B cell (primary cell): ENCODE measurements at regions of chr19 and their contacts with region 1.

Region 1: DNA sequence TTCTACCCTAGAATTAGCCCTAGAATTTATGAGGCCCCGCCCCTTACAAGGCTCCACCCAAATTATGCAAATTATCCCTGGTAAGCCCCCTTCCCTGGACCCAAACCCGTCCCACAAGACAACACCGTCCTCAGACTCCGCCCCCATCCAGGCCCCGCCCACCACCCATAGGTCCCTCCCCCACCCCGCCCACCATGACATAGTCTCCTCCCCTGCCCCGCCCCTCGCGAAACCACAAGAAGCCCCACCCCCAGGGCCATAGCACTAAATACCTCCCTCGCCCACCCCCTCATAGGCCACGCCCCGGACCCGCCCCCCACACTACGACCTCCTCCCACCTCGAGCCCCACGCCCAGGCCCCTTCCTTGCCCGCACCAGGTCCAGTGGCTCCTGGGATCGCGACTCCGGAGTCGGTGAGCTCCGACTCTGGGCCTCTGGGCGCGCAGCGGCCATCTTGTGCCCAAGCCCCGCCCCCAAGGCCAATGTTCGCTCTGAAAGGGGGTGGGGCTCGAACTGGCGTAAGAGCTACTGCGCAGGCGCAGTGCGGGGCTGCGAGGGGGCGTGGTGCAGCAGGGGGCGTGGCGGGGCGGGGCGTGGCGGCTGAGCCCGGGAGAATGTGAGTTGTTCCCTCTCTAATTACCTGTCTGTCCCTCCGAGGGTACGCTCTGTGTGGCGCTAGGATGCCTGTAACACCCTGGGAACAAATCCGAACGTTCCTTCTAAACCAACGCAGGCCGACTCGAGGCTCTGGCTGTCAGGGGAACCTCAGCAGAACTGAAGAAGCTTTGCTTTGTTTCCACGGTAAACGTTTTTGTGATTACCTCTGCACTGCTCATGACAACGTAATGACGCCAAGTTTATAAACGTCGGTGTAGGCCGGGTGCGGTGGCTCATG is at the start of gene ZNF784:
- DNase-seq: peak; percentile 97
- ATAC-seq: peak; percentile 86
- H3K4me3 ChIP-seq: peak within 1 kb of the TSS in 4 of 5 experiments; percentile 47 to 84 (median 69)
- H3K4me3 Mint-ChIP-seq: peak within 1 kb of the TSS; percentile 95
- H3K27ac ChIP-seq: peak within 1 kb of the TSS; percentile 87
- H3K27ac Mint-ChIP-seq: peak within 1 kb of the TSS; percentile 99
- H3K4me1 ChIP-seq: peaks cover 10 to 14% of the 10 kb centered on the region in 2 donors
- H3K4me1 Mint-ChIP-seq: peaks cover 18% of the 10 kb centered on the region
- H3K27me3 ChIP-seq: no peaks in the 10 kb centered on the region
- H3K27me3 Mint-ChIP-seq: no peaks in the 10 kb centered on the region
- CTCF ChIP-seq: no peak
- total RNA-seq, gene ZNF784: 9.7 and 11.5 TPM in 2 replicates

Region 2: DNA sequence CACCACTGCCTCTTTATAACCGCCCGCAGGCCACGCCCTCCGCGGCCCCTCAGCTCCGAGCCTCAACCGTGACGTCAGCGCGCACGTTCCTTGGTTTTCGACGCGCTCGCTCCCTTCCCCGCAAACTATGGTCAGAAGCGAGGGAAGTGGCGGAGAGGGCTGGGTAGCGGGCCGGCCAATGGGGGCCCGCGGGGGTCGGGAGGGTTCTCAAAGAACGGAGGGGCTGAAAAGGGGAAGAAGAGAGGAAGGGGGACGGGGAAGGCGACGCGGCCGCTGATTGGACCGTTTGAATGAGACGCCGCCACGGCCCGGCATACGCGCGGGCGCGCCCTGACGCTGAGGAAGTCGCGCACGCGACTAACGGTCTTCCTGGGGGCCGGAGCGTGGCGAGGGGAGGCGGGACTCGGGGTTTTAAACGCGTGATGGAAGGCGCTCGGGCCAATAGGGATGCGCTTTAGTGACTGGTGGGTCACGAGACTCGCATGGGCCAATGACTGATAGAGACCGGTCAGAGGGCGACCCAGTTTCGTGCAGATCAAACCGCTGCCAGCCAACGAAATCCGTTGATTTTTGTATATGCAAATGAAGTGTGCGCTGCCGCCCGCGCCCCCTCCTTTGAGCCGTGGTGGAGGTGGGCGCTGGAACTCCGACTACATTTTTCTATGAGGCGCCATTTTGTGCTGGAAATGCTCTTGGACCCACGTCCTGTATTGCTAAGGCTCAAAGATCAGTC is 216.4 kb before region 1 on chr19:
- CTCF ChIA-PET with region 1: no interaction called
- POLR2A ChIA-PET with region 1: interaction called, 8 read pairs
- intact Hi-C with region 1: loop called (anchors 5 kb)
- DNase-seq: peak; percentile 100
- ATAC-seq: peak; percentile 83
- H3K4me3 ChIP-seq: peak overlapping the region; percentile 55 to 89 (median 77)
- H3K4me3 Mint-ChIP-seq: peak overlapping the region; percentile 98
- H3K27ac ChIP-seq: peak overlapping the region; percentile 99 to 100
- H3K27ac Mint-ChIP-seq: peak overlapping the region; percentile 99
- H3K4me1 ChIP-seq: peaks cover 11 to 25% of the 10 kb centered on the region in 2 donors
- H3K4me1 Mint-ChIP-seq: peaks cover 32% of the 10 kb centered on the region
- H3K27me3 ChIP-seq: no peaks in the 10 kb centered on the region
- H3K27me3 Mint-ChIP-seq: no peaks in the 10 kb centered on the region
- CTCF ChIP-seq: no peak

Region 3: DNA sequence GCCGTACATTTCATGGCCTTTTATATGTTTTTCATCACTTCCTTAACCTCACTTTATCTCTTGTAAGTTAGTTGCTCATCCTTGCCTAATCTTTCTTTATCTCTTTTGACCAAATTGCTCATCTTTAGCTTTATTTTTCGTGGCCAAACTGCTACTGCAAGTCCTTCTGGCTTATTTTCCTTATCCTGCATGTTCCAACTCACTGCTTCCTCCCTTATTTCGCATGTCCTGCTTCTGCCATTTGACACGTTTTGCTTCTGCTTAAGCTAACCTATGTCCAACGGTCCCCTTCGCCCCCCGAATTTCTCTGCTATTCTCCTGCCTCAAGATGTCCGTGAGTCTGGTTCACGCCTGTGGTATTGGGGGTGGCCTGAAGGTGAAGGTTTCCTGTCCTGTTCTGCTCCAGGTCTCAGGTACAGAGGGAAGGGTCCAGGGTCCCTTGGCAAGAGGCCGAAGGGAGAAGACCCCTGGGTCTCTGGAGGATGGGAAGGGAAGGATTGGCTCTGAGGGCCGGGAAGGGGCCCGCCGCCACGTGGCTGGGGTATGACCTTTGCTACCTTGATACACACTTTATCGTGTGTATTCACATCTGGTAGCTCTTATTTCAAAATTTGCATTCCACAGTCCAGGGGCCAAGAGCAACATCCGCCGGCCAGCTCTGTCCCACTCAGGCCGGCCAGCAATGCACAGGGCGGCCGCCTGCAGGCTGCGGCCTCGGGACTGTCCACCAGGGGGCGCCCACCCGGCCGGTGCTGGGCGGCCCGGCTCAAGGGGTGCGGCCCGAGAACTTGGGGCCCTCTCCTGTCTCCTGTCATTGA is 156.9 kb before region 1 on chr19:
- CTCF ChIA-PET with region 1: interaction called, 12 read pairs
- POLR2A ChIA-PET with region 1: interaction called, 5 read pairs
- intact Hi-C with region 1: no loop called
- DNase-seq: peak; percentile 79
- ATAC-seq: peak; percentile 99
- H3K4me3 ChIP-seq: no peak overlapping the region
- H3K4me3 Mint-ChIP-seq: no peak overlapping the region
- H3K27ac ChIP-seq: no peak overlapping the region
- H3K27ac Mint-ChIP-seq: no peak overlapping the region
- H3K4me1 ChIP-seq: peaks cover 4 to 7% of the 10 kb centered on the region in 2 donors
- H3K4me1 Mint-ChIP-seq: peaks cover 6% of the 10 kb centered on the region
- H3K27me3 ChIP-seq: no peaks in the 10 kb centered on the region
- H3K27me3 Mint-ChIP-seq: no peaks in the 10 kb centered on the region
- CTCF ChIP-seq: peak; percentile 99

Region 4: DNA sequence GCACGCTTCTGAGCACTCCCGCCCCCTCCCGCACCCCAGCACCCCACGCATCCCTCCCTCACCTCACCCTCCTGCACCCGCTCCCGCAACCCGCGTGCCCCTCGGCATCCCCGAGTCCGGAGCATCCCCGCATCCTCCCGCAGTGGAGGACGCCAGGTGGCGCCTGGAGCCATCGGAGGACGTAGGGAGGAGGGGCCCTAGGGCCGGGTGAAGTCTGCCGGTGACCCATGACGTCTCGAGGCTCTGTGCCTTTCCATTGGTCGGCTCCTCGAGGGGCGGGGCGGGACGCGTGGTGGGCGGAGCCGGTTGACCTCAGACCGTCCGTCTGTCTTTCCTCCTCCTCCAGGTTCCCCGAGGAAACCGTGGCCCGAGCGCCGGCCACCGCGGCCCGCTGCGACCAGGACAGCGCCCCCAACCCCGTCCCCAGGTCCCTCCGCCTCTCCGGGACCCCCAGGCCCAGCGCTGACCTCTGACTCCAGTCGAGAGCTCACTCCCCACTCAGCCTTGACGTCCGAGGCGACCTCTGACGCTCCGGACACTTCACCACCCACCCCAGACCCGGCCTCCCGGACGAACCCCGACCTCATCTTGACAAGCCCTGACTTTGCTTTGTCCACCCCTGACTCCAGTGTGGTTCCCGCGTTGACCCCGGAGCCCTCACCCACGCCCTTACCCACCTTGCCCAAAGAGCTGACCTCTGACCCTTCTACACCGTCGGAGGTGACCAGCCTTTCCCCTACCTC is 107.3 kb before region 1 on chr19:
- CTCF ChIA-PET with region 1: interaction called, 7 read pairs
- POLR2A ChIA-PET with region 1: interaction called, 3 read pairs
- intact Hi-C with region 1: loop called (anchors 1 kb)
- DNase-seq: peak; percentile 94
- ATAC-seq: peak; percentile 100
- H3K4me3 ChIP-seq: peak overlapping the region in 4 of 5 experiments; percentile 53 to 60 (median 58)
- H3K4me3 Mint-ChIP-seq: peak overlapping the region; percentile 88
- H3K27ac ChIP-seq: peak overlapping the region; percentile 91 to 93
- H3K27ac Mint-ChIP-seq: peak overlapping the region; percentile 84
- H3K4me1 ChIP-seq: peaks cover 4 to 11% of the 10 kb centered on the region in 2 donors
- H3K4me1 Mint-ChIP-seq: peaks cover 9% of the 10 kb centered on the region
- H3K27me3 ChIP-seq: peaks cover 0 to 8% (median 0%) of the 10 kb centered on the region in 4 experiments
- H3K27me3 Mint-ChIP-seq: peaks cover 8% of the 10 kb centered on the region
- CTCF ChIP-seq: peak; percentile 81

Region 5: DNA sequence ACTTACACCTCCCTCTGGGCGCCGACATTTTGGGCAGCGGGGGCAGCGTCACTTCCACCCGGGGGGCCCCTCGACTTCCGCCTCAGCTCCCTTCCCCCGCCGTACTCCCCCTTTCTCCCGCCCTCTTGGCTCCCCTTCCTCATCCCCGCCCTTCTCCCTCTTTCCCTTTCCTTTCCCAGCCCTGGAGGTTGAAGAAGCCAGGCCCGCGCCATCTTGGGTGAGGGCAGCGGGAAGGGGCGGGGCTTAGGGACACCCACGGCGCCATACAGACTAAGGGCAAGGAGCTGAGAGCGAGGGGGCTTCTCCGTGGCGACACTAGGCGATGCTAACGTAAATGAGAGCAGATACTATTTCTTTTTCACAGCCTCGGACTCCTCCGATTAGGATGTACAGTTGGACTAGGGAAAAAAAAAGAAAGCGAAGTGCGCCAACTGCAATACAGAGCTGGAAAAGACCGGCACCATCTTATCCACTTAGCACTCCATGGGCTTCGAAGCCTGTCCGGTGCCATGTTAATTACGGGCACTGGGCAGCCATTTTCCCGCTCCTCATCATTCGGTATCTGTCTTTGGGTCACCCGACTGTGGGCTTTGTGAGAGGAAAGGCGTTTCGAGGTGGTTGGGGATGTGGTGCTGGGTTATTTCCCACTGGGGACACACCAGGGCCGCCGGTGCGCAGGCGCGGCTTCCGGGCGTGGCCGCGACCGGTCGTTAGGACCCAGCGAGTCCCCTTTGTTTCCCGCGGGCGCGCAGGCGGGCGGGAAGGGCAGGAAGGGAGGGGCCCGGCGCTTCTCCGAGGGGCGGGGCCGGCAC is 24.7 kb before region 1 on chr19 and contains the start of gene FIZ1:
- CTCF ChIA-PET with region 1: interaction called, 5 read pairs
- POLR2A ChIA-PET with region 1: interaction called, 58 read pairs
- intact Hi-C with region 1: loop called (anchors 1 kb)
- DNase-seq: peak; percentile 99
- ATAC-seq: peak; percentile 70
- H3K4me3 ChIP-seq: peak within 1 kb of the TSS; percentile 59 to 97 (median 82)
- H3K4me3 Mint-ChIP-seq: peak within 1 kb of the TSS; percentile 100
- H3K27ac ChIP-seq: peak within 1 kb of the TSS; percentile 86 to 94
- H3K27ac Mint-ChIP-seq: peak within 1 kb of the TSS; percentile 99
- H3K4me1 ChIP-seq: peaks cover 9 to 24% of the 10 kb centered on the region in 2 donors
- H3K4me1 Mint-ChIP-seq: peaks cover 25% of the 10 kb centered on the region
- H3K27me3 ChIP-seq: no peaks in the 10 kb centered on the region
- H3K27me3 Mint-ChIP-seq: no peaks in the 10 kb centered on the region
- CTCF ChIP-seq: no peak
- total RNA-seq, gene FIZ1: 21.4 and 26.4 TPM in 2 replicates

Region 6: DNA sequence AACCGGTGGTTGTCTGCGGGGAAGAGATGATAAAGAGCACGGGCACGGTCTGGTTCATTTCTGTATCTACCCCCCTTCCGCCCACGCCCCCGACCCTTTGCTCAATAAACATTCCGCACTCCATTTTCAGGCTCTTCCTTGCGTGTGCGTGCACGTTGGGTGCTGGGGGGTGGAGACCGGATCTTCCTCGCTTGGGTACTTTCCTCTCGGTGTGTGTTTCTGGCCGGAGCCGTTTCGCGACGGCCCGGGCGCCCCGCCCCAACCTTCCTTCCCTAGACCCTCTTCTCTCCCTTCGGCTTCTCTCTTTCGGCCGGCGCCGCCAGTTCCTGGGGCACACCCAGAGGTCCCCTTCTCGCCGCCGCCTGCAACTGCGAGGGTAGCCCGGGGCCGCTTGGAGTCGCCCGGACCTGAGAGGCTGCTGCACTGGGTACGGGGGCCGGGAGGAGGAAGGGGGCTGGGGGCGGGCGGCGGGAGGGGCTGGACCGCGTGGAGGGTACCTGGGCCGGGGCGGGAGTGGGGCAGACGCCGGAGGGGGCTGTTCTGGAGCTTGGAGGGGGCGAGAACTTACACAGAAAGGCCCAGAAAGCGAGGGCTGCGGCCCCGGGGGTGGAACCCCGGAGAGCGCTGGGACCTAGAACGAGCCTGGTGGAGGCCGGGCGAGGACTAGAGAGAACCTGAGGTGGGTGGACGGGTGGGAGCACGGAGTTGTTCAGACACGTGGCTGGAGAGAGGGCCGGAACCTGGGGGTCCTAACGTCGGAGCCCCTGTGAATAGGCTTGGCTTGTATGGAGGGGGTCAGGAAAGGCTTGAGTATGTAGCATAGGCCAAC is 19.2 kb after region 1 on chr19 and contains the start of gene ZNF581:
- CTCF ChIA-PET with region 1: interaction called, 6 read pairs
- POLR2A ChIA-PET with region 1: interaction called, 10 read pairs
- intact Hi-C with region 1: no loop called
- DNase-seq: peak; percentile 90
- ATAC-seq: peak; percentile 36
- H3K4me3 ChIP-seq: peak within 1 kb of the TSS; percentile 59 to 85 (median 78)
- H3K4me3 Mint-ChIP-seq: peak within 1 kb of the TSS; percentile 88
- H3K27ac ChIP-seq: peak within 1 kb of the TSS; percentile 79 to 82
- H3K27ac Mint-ChIP-seq: peak within 1 kb of the TSS; percentile 98
- H3K4me1 ChIP-seq: peaks cover 32 to 68% of the 10 kb centered on the region in 2 donors
- H3K4me1 Mint-ChIP-seq: peaks cover 60% of the 10 kb centered on the region
- H3K27me3 ChIP-seq: no peaks in the 10 kb centered on the region
- H3K27me3 Mint-ChIP-seq: no peaks in the 10 kb centered on the region
- CTCF ChIP-seq: no peak
- total RNA-seq, gene ZNF581: 47.3 and 51.3 TPM in 2 replicates